SK-N-SH (cell line): ENCODE measurements at regions of chr5 and their contacts with region 1.

Region 1: GRCh38 chr5:36701085-36701698 is 94.8 kb downstream of the SLC1A3 start:
- DNase-seq: no peak
- H3K4me3 ChIP-seq: no peak overlapping the region
- H3K27ac ChIP-seq: no peak overlapping the region
- H3K4me1 ChIP-seq: no peaks in the 10 kb centered on the region; a peak in 1 of 4 replicates
- H3K27me3 ChIP-seq: peaks cover 45% of the 10 kb centered on the region; the same call in 1 of the 2 replicates
- CTCF ChIP-seq: no peak
- EP300 ChIP-seq: no peak
- RAD21 ChIP-seq: no peak

Region 2: GRCh38 chr5:36392818-36393217 is 308.4 kb before region 1 on chr5:
- CTCF ChIA-PET with region 1: no interaction called
- POLR2A ChIA-PET with region 1: no interaction called
- DNase-seq: peak; percentile 28
- H3K4me3 ChIP-seq: no peak overlapping the region
- H3K27ac ChIP-seq: no peak overlapping the region
- H3K4me1 ChIP-seq: peaks cover 3 to 5% of the 10 kb centered on the region in 2 experiments; a peak in 2 of 4 replicates
- H3K27me3 ChIP-seq: peaks cover 9% of the 10 kb centered on the region; the same call in 1 of the 2 replicates
- CTCF ChIP-seq: no peak
- EP300 ChIP-seq: 0 out of 4 replicates have a peak, but pooled peaks of 1 of the 2 experiments have one; percentile 8
- RAD21 ChIP-seq: no peak

Region 3: GRCh38 chr5:36414869-36415282 is 286.3 kb before region 1 on chr5:
- CTCF ChIA-PET with region 1: interaction called, 123 read pairs
- POLR2A ChIA-PET with region 1: no interaction called
- DNase-seq: peak; percentile 26
- H3K4me3 ChIP-seq: no peak overlapping the region; a peak in 1 of 4 replicates
- H3K27ac ChIP-seq: no peak overlapping the region
- H3K4me1 ChIP-seq: no peaks in the 10 kb centered on the region
- H3K27me3 ChIP-seq: peaks cover 38% of the 10 kb centered on the region; the same call in 1 of the 2 replicates
- CTCF ChIP-seq: peak; percentile 71
- EP300 ChIP-seq: no peak
- RAD21 ChIP-seq: peak; percentile 72

Region 4: DNA sequence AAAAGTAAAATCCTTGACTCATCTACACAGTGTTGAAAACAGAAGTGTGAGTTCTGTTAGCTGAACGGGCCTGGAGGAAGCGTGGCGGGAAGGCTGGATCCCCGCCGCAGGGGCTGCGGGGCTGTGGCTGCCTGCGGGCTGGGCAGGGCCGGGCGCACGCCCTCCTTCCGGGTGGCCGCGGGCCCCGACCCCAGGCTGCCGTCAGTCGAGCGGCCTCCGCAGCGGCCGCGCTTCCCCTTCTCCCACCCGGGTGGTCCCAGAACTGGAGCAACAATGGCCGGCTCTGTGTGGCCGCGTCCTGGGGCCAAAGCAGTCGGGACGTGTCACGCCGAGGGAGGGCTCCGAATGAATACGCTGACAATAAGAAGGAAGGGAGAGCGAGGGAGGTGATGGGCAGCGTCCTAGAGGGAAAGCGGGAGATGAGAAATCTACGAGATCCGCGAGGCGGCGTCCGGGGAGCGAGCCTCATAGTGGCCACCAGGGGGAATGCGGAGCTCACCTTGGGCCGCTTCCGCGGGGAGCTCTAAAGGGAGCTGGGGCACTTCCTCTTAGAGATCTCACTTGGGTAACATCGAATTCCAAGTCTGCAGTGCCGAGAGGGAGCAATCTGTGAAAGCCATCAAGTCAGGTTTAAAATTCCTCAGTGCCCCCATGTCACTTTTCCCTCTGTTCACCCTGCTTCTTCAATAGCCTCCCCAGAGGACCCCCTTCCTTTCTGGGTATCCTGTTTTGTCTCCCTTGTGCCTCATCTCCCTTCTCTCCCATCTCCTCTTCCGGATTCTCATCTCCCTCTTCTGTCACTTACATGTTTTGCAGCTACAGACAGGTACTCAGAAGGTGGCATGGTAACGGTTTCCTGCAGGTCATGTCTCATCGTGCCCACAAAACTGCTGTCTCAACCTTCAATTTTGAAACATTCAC is 10.9 kb before region 1 on chr5:
- CTCF ChIA-PET with region 1: interaction called, 43 read pairs
- POLR2A ChIA-PET with region 1: no interaction called
- DNase-seq: peak; percentile 91
- H3K4me3 ChIP-seq: peak overlapping the region; percentile 56 to 67
- H3K27ac ChIP-seq: no peak overlapping the region
- H3K4me1 ChIP-seq: peaks cover 0 to 3% of the 10 kb centered on the region in 2 experiments; a peak in 1 of 4 replicates
- H3K27me3 ChIP-seq: peaks cover 7% of the 10 kb centered on the region; the same call in 1 of the 2 replicates
- CTCF ChIP-seq: peak; percentile 72
- EP300 ChIP-seq: no peak
- RAD21 ChIP-seq: peak; percentile 48

Region 5: GRCh38 chr5:37063739-37064138 is 362.5 kb after region 1 on chr5:
- CTCF ChIA-PET with region 1: no interaction called
- POLR2A ChIA-PET with region 1: no interaction called
- DNase-seq: no peak
- H3K4me3 ChIP-seq: no peak overlapping the region
- H3K27ac ChIP-seq: no peak overlapping the region
- H3K4me1 ChIP-seq: no peaks in the 10 kb centered on the region
- H3K27me3 ChIP-seq: no peaks in the 10 kb centered on the region
- CTCF ChIP-seq: no peak
- EP300 ChIP-seq: no peak
- RAD21 ChIP-seq: no peak